Activated T-helper 1 cell treated with anti-CD3 and anti-CD28 coated beads, Interleukin-12 subunit alpha, Interleukin-12 subunit beta, Interleukin-2, Interleukin-4 antibody, amounts not matched to agents 30 ng/mL and 10 ng/mL and 1 ng/mL, durations not matched to agents 14 hours and 24 hours and 36 hours (primary cell): ENCODE measurements at regions of chr6 and their contacts with region 1.

Region 1: GRCh38 chr6:96521644-96522464 is at the start of gene UFL1:
- DNase-seq: peak; percentile 89
- H3K4me3 Mint-ChIP-seq: peak within 1 kb of the TSS; percentile 100
- H3K27ac Mint-ChIP-seq: peak within 1 kb of the TSS; percentile 100
- H3K4me1 Mint-ChIP-seq: peaks cover 24% of the 10 kb centered on the region
- H3K27me3 Mint-ChIP-seq: no peaks in the 10 kb centered on the region
- total RNA-seq, gene UFL1: 22.0 and 22.7 TPM in 2 replicates

Region 2: GRCh38 chr6:95577304-95578105 is 944.3 kb before region 1 on chr6 and contains the start of gene MANEA:
- intact Hi-C with region 1: loop called (anchors 1 kb)
- DNase-seq: peak; percentile 77
- H3K4me3 Mint-ChIP-seq: peak within 1 kb of the TSS; percentile 91
- H3K27ac Mint-ChIP-seq: peak within 1 kb of the TSS; percentile 98
- H3K4me1 Mint-ChIP-seq: peaks cover 46% of the 10 kb centered on the region
- H3K27me3 Mint-ChIP-seq: peaks cover 1% of the 10 kb centered on the region
- total RNA-seq, gene MANEA: 23.1 and 26.8 TPM in 2 replicates

Region 3: GRCh38 chr6:96304997-96305396 is 216.9 kb before region 1 on chr6:
- intact Hi-C with region 1: loop called (anchors 2 kb)
- DNase-seq: no peak
- H3K4me3 Mint-ChIP-seq: no peak overlapping the region
- H3K27ac Mint-ChIP-seq: no peak overlapping the region
- H3K4me1 Mint-ChIP-seq: peaks cover 5% of the 10 kb centered on the region
- H3K27me3 Mint-ChIP-seq: no peaks in the 10 kb centered on the region

Region 4: DNA sequence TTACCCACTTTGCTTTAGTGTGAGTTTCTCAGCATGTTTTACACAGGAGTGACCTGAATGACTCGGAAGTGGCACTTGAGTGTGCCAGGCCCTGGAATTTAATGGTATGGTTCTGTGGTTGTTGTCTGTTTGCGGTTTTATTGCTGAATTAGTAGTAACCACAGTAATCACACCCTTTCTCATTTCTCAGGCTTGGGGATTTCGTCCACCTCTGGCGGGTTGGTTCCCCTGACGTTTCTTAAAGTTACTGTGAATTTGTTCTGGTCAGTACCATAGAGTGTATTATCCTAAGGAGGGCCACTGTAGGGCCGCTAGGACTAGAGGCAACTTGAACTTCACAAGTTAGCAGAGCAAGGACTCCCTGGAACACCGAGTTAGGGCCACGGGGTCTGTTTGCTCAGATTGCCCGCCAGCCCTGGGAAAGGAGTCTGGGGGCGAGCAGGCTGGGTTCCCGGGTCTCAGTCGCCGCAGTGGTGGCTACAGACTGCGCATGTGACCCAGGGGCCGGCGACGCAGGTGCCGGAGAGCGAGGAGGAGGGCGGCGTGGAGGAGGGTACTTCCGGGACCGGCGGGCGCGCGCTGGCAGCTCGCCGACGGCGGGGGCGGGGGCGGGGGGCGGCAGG is 402.1 kb after region 1 on chr6:
- intact Hi-C with region 1: loop called (anchors 1 kb)
- DNase-seq: no peak
- H3K4me3 Mint-ChIP-seq: peak overlapping the region; percentile 87
- H3K27ac Mint-ChIP-seq: peak overlapping the region; percentile 85
- H3K4me1 Mint-ChIP-seq: peaks cover 33% of the 10 kb centered on the region
- H3K27me3 Mint-ChIP-seq: peaks cover 2% of the 10 kb centered on the region

Region 5: DNA sequence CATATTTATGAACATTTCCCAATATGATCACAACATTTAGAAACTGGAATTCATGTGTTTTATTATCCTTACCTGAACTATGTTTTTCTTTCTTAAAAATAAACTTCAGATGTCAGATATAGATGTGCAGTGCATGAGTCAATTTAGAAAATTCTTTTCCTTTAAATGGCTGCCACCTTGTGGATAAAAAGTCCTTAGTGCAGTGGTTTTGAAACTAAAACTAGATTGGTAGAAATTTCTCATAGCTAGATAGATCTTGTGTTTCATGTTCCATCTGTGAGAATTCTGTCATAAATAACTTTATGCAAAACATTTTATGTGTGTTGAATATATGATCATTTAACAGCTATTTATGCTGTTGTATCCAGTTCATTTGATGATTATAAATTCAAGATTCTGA is 537.6 kb after region 1 on chr6:
- intact Hi-C with region 1: loop called (anchors 5 kb)
- DNase-seq: no peak
- H3K4me3 Mint-ChIP-seq: no peak overlapping the region
- H3K27ac Mint-ChIP-seq: no peak overlapping the region
- H3K4me1 Mint-ChIP-seq: no peaks in the 10 kb centered on the region
- H3K27me3 Mint-ChIP-seq: peaks cover 3% of the 10 kb centered on the region